H1 (cell line): ENCODE measurements at regions of chr19 and their contacts with region 1.

Region 1: DNA sequence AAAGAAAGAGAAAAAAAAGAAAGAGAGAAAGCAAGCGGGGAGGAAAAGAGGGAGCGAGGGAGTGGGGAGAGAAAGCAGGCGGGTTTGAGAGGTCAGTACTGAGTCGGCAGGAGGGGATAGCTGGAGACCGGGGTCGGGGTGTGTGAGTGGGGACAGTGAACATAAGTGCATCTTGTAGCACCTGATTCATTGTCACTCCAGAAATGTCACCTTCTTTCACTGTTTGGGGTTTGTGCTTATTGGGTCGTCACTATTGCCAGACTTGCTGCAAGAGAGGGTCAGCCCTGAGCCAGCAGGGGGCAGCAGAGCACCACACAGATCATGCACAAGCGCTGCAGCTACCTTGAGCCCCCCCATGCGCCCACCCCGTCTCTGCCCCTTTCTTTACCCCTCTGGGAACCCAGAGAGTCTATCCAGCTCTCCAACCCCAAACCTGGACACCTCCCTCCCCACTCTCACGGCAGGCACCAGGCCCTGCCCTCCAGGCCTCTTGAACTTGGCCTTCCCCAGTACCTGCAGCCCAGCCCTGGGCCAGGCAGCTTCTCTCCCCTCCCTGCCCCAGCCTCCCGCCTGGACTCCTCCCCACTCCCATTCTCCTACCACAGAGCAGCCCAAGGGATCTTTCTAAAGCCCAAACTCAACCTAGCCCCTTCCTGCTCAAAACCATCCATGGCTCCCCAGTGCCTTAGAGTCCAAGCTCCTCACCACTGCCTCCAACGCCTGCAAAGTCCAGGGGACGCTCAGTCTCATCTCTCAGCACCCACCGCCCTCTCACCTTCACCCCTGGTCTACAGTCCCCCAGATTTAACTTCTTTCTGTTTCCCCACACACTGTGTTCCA is 9.7 kb upstream of the CEACAM16 start:
- DNase-seq: peak; percentile 65 to 96
- H3K4me3 ChIP-seq: peak overlapping the region in 1 of 4 experiments; percentile 34; a peak in 1 of 8 replicates
- H3K27ac ChIP-seq: no peak overlapping the region
- H3K4me1 ChIP-seq: peaks cover 0 to 12% (median 2%) of the 10 kb centered on the region in 4 experiments; a peak in 4 of 7 replicates
- H3K27me3 ChIP-seq: no peaks in the 10 kb centered on the region
- CTCF ChIP-seq: peak; percentile 92 to 94 (median 93)
- EP300 ChIP-seq: no peak
- POLR2A ChIP-seq: no peak
- RAD21 ChIP-seq: peak; percentile 90 to 91

Region 2: DNA sequence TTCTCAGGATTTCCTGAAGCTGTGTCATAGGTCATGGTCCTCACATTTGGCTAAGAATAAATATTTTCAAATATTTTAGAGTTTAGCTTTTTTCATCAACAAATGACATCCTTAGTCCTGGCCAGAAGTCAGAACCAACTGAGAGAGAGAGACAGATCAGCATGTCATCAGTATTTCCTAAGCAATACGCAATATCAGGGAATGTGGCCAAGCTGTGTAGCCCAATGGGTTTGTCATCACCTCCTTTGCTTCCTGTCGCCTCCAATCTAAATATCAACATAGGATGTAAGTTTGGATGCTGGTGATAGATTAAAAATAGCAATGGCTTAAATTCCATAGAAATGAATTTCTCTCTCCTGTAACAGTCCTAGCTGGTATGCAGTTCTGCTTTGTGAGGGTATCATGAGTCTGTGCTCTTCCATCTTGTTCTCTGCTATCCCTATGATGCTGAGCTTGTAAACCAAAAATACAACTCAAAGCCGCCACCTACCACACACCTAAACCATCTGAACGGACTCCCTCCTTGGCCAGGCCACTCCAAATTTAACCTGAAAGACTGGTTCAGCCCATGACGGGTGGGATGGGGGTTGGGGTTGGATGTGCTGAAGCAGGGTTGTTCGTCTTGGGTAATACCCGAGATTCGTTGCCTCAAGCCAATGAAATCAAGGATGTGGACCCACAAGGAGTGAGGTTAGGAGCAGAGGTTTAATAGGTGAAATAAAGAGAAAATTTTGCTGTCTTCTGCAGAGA is 85.9 kb before region 1 on chr19:
- CTCF ChIA-PET with region 1: no interaction called
- POLR2A ChIA-PET with region 1: no interaction called
- DNase-seq: no peak
- H3K4me3 ChIP-seq: 0 out of 8 replicates have a peak overlapping the region, but pooled peaks of 1 of the 4 experiments have one; percentile 9
- H3K27ac ChIP-seq: no peak overlapping the region
- H3K4me1 ChIP-seq: peaks cover 0 to 8% (median 4%) of the 10 kb centered on the region in 4 experiments; a peak in 5 of 7 replicates
- H3K27me3 ChIP-seq: no peaks in the 10 kb centered on the region
- CTCF ChIP-seq: no peak
- EP300 ChIP-seq: no peak
- POLR2A ChIP-seq: no peak
- RAD21 ChIP-seq: no peak

Region 3: DNA sequence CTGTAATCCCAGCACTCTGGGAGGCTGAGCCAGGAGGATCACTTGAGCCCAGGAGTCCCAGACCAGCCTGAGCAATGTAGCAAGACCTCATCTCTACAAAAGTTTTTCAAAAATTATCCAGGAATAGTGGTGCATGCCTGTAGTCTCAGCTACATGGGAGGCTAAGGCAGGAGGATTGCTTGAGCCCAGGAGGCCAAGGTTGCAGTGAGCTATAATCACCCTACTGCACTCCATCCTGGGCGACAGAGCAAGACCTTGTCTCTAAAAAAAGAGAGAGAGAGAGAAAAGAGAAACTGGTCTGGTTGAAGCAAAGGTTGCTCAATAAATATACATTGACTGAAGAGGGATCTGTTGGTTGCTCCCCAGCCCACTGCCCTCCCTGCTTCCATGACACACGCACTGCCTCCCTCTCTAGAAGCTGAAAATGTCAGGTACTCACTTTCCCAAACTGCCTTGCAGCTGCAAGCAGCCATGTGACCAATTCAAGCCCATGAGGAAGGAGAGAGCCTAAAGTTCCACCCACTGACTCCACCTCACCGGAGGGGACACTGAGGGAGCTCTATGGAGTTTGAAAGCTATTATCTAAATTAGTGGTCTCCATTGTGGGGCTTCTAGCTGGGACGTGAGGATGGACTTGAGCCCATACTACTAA is 23.7 kb after region 1 on chr19:
- CTCF ChIA-PET with region 1: interaction called, 134 read pairs
- POLR2A ChIA-PET with region 1: interaction called, 4 read pairs
- DNase-seq: no peak
- H3K4me3 ChIP-seq: no peak overlapping the region
- H3K27ac ChIP-seq: no peak overlapping the region
- H3K4me1 ChIP-seq: no peaks in the 10 kb centered on the region
- H3K27me3 ChIP-seq: no peaks in the 10 kb centered on the region
- CTCF ChIP-seq: no peak
- EP300 ChIP-seq: no peak
- POLR2A ChIP-seq: no peak
- RAD21 ChIP-seq: no peak

Region 4: GRCh38 chr19:44732615-44733014 is 43.3 kb after region 1 on chr19:
- CTCF ChIA-PET with region 1: interaction called, 20 read pairs
- POLR2A ChIA-PET with region 1: no interaction called
- DNase-seq: no peak
- H3K4me3 ChIP-seq: no peak overlapping the region
- H3K27ac ChIP-seq: no peak overlapping the region
- H3K4me1 ChIP-seq: no peaks in the 10 kb centered on the region; a peak in 1 of 7 replicates
- H3K27me3 ChIP-seq: no peaks in the 10 kb centered on the region
- CTCF ChIP-seq: no peak
- EP300 ChIP-seq: no peak
- POLR2A ChIP-seq: no peak
- RAD21 ChIP-seq: no peak

Region 5: DNA sequence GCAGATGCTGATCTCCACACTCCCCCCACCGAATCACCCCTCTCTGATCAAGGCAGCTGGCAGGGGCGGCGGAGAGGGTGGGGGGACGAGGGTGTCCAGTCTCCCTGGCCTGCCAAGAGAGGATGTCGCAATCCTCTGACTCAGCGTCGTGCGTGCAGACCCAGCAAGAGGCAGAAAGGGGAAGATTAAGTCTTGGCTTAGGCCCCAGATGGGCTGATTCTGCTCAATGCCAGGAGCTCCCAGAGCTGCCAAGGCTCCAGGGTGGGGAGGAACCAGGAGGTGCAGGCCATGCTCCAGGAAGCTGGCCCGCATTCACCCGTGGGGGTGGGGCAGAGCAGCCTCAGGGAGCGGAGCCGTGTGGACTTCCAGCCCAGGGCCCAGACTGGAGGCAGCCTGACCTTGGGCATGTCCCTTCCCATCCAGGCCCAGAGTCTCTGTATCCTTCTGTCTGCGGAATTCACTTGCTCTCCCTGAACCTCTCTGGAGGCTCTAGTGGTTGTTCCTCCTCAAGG is 52.6 kb after region 1 on chr19:
- CTCF ChIA-PET with region 1: interaction called, 31 read pairs
- POLR2A ChIA-PET with region 1: no interaction called
- DNase-seq: no peak
- H3K4me3 ChIP-seq: no peak overlapping the region
- H3K27ac ChIP-seq: no peak overlapping the region
- H3K4me1 ChIP-seq: peaks cover 0 to 4% (median 2%) of the 10 kb centered on the region in 4 experiments; a peak in 4 of 7 replicates
- H3K27me3 ChIP-seq: peaks cover 6 to 20% (median 15%) of the 10 kb centered on the region in 4 experiments
- CTCF ChIP-seq: no peak
- EP300 ChIP-seq: no peak
- POLR2A ChIP-seq: no peak
- RAD21 ChIP-seq: no peak

Region 6: DNA sequence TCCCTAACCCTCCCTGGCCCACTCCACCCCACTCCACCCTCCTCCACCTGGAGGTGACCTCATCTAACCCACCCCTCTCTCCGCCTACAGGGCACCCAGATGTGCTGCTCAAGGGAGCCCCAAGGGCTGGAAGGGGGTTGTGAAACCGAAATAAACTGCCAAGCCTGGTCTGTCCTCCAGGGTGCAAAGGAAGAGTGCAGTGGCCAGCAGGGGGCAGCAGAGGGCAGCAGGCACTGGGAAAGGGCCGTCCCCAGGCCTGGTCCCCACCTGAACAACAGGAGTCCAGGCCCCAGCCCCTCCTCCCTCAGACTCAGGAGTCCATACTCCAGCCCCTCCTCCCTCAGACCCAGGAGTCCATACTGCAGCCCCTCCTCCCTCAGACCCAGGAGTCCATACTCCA is 111.2 kb after region 1 on chr19:
- CTCF ChIA-PET with region 1: interaction called, 11 read pairs
- POLR2A ChIA-PET with region 1: no interaction called
- DNase-seq: peak; percentile 91 to 99
- H3K4me3 ChIP-seq: no peak overlapping the region
- H3K27ac ChIP-seq: no peak overlapping the region
- H3K4me1 ChIP-seq: peaks cover 5 to 10% (median 6%) of the 10 kb centered on the region in 4 experiments; a peak in 6 of 7 replicates
- H3K27me3 ChIP-seq: peaks cover 0 to 19% (median 17%) of the 10 kb centered on the region in 4 experiments; a peak in 6 of 7 replicates
- CTCF ChIP-seq: peak; percentile 96 to 99 (median 99)
- EP300 ChIP-seq: no peak
- POLR2A ChIP-seq: no peak
- RAD21 ChIP-seq: peak; percentile 76 to 78

Region 7: GRCh38 chr19:44817725-44818465 is 128.6 kb after region 1 on chr19:
- CTCF ChIA-PET with region 1: no interaction called
- POLR2A ChIA-PET with region 1: no interaction called
- DNase-seq: no peak
- H3K4me3 ChIP-seq: no peak overlapping the region
- H3K27ac ChIP-seq: no peak overlapping the region
- H3K4me1 ChIP-seq: no peaks in the 10 kb centered on the region; a peak in 1 of 7 replicates
- H3K27me3 ChIP-seq: no peaks in the 10 kb centered on the region; a peak in 4 of 7 replicates
- CTCF ChIP-seq: no peak
- EP300 ChIP-seq: no peak
- POLR2A ChIP-seq: no peak
- RAD21 ChIP-seq: no peak